CD8-positive, alpha-beta T cell (primary cell): ENCODE measurements at regions of chr20 and their contacts with region 1.

Region 1: DNA sequence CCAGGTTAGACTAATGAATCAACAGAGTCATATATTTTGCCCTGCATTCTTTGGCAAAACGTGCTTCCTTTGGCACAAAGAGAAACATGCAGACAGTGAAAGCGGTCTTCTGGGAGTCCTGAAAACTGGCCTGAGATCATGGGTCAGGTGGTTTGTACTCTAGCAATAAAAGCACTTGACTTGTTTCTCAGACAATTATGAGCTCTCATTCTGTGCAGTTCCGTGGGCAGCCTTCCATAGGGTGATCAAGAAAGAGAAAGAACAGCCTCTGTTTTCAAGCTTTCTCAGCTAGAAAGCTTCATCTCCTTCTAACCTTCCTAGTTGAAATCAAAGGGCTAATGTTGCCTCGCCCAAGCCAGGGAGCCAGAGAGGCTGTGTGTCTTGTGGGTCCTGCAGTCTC is 62.7 kb upstream of the ISM1 start:
- DNase-seq: no peak
- ATAC-seq: no peak
- H3K4me3 ChIP-seq: no peak overlapping the region
- H3K4me3 Mint-ChIP-seq: no peak overlapping the region
- H3K27ac ChIP-seq: no peak overlapping the region
- H3K27ac Mint-ChIP-seq: no peak overlapping the region
- H3K4me1 ChIP-seq: no peaks in the 10 kb centered on the region
- H3K4me1 Mint-ChIP-seq: no peaks in the 10 kb centered on the region
- H3K27me3 ChIP-seq: no peaks in the 10 kb centered on the region
- H3K27me3 Mint-ChIP-seq: no peaks in the 10 kb centered on the region
- CTCF ChIP-seq: no peak

Region 2: DNA sequence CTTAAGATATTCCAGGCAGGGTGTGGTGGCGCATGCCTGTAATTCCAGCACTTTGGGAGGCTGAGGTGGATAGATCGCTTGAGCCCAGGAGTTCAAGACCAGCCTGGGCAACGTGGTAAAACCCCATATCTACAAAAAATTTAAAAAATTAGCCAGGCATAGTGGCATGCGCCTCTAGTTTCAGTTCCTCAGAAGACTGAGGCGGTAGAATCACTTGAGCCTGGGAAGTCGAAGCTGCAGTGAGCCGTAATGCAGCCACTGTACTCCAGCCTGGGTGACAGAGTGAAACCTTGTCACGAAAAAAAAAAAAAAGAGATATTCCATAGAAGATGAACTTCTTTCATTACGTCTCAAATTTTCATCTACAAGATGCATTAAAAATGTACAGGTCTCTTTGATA is 16.0 kb after region 1 on chr20:
- CTCF ChIA-PET with region 1: no interaction called
- POLR2A ChIA-PET with region 1: no interaction called
- intact Hi-C with region 1: loop called in 1 of 2 experiments (anchors 2 kb)
- DNase-seq: no peak
- ATAC-seq: no peak
- H3K4me3 ChIP-seq: no peak overlapping the region
- H3K4me3 Mint-ChIP-seq: no peak overlapping the region
- H3K27ac ChIP-seq: no peak overlapping the region
- H3K27ac Mint-ChIP-seq: no peak overlapping the region
- H3K4me1 ChIP-seq: no peaks in the 10 kb centered on the region
- H3K4me1 Mint-ChIP-seq: no peaks in the 10 kb centered on the region
- H3K27me3 ChIP-seq: no peaks in the 10 kb centered on the region
- H3K27me3 Mint-ChIP-seq: peaks cover 2% of the 10 kb centered on the region
- CTCF ChIP-seq: no peak

Region 3: GRCh38 chr20:13186043-13186774 is 27.8 kb after region 1 on chr20:
- CTCF ChIA-PET with region 1: no interaction called
- POLR2A ChIA-PET with region 1: no interaction called
- intact Hi-C with region 1: no loop called
- DNase-seq: no peak
- ATAC-seq: no peak
- H3K4me3 ChIP-seq: no peak overlapping the region
- H3K4me3 Mint-ChIP-seq: no peak overlapping the region
- H3K27ac ChIP-seq: no peak overlapping the region
- H3K27ac Mint-ChIP-seq: no peak overlapping the region
- H3K4me1 ChIP-seq: peaks cover 4% of the 10 kb centered on the region
- H3K4me1 Mint-ChIP-seq: no peaks in the 10 kb centered on the region
- H3K27me3 ChIP-seq: no peaks in the 10 kb centered on the region
- H3K27me3 Mint-ChIP-seq: no peaks in the 10 kb centered on the region
- CTCF ChIP-seq: no peak